ENCODE measurements at regions of chr12 and their contacts with region 1.

Region 1: GRCh38 chr12:52879394-52880351 is 25.2 kb downstream of the KRT8 start:
- DNase-seq: peak in 1 of 2 experiments; percentile 86
- H3K4me3 ChIP-seq: peak overlapping the region in 3 of 4 experiments; percentile 29 to 59 (median 42); a peak in 6 of 8 replicates
- H3K27ac ChIP-seq: no peak overlapping the region
- H3K4me1 ChIP-seq: peaks cover 0 to 8% (median 4%) of the 10 kb centered on the region in 4 experiments; a peak in 4 of 7 replicates
- H3K27me3 ChIP-seq: peaks cover 0 to 10% (median 5%) of the 10 kb centered on the region in 4 experiments; a peak in 3 of 7 replicates
- CTCF ChIP-seq: peak; percentile 80 to 98 (median 98)
- EP300 ChIP-seq: no peak
- POLR2A ChIP-seq: no peak
- RAD21 ChIP-seq: peak; percentile 96

Region 2: DNA sequence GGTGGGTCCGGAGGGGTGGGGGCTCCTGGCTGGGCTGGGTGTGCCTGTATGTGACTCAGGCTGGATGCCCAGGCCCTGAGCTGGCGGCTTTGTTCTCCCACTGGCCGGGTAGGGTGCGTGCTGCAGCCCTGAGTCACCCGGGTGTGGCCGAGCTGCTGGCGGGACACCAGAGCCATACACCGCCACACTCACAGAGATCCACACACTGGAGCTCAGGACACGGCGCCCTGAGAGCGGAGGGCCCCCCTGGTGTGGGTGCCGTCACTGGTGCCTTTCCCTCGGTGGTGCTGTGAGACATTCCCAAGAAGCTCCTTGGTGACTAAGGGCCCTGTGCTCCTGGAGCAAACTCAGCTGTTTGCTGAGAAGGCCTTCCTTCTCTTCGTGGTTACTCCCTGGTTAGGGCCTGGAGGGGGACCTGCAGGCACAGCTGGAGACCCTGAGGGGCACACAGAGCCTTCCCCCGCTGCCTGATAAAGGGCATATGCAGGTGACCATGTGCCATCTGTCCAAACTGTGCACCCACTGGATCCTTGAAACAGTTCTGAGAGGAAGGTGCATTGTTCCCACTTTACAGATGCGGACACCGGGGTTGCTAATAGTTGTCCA is 732.2 kb before region 1 on chr12:
- CTCF ChIA-PET with region 1: interaction called, 26 read pairs
- POLR2A ChIA-PET with region 1: no interaction called
- DNase-seq: no peak
- H3K4me3 ChIP-seq: no peak overlapping the region
- H3K27ac ChIP-seq: peak overlapping the region; percentile 73
- H3K4me1 ChIP-seq: peaks cover 8 to 44% (median 19%) of the 10 kb centered on the region in 4 experiments
- H3K27me3 ChIP-seq: no peaks in the 10 kb centered on the region; a peak in 1 of 7 replicates
- CTCF ChIP-seq: no peak
- EP300 ChIP-seq: no peak
- POLR2A ChIP-seq: no peak
- RAD21 ChIP-seq: no peak

Region 3: GRCh38 chr12:52380271-52380694 is 499.4 kb before region 1 on chr12:
- CTCF ChIA-PET with region 1: interaction called, 31 read pairs
- POLR2A ChIA-PET with region 1: no interaction called
- DNase-seq: peak in 1 of 2 experiments; percentile 67
- H3K4me3 ChIP-seq: no peak overlapping the region
- H3K27ac ChIP-seq: no peak overlapping the region
- H3K4me1 ChIP-seq: no peaks in the 10 kb centered on the region
- H3K27me3 ChIP-seq: no peaks in the 10 kb centered on the region
- CTCF ChIP-seq: peak; percentile 68 to 77 (median 69)
- EP300 ChIP-seq: no peak
- POLR2A ChIP-seq: no peak
- RAD21 ChIP-seq: peak; percentile 36 to 51; a peak in 3 of 4 replicates

Region 4: DNA sequence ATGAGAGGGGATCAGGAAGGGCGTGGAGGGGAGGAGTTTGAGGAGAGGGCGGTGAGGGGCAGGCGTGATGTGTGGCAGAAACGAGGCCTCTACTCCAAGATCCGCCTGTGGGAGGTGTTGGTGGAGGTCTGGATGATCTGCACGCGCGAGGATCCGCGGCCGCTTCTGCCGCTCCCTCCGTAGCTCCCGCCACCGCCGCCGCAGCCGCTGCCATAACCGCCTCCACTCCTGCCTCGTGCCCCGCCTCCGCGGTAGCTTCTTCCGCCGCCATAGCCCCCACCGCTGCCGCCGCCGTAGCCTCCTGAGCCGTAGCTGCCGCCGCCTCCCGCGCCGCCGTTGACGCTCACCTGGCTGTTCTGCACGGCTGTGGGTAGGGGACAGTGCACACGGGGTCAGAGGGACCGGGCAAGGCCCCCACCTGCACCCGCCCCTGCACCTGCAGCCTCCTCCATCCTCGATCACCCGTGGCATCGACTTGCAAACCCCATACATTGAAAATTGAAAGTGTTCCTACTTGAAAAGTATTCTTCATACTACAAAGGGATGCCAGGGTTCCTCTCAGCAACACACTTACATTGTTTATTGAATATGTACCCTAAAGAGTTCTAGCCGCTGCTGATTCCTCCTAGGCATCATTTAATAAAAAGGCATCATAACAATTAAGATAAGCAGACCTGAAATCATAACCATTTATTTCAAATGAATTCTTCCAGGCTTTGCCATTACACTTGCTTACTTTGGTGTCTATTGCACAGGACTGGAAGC is 188.4 kb before region 1 on chr12:
- CTCF ChIA-PET with region 1: interaction called, 20 read pairs
- POLR2A ChIA-PET with region 1: no interaction called
- DNase-seq: peak in 1 of 2 experiments; percentile 68
- H3K4me3 ChIP-seq: peak overlapping the region; percentile 31 to 58 (median 36)
- H3K27ac ChIP-seq: no peak overlapping the region
- H3K4me1 ChIP-seq: peaks cover 0 to 9% (median 3%) of the 10 kb centered on the region in 4 experiments; a peak in 2 of 7 replicates
- H3K27me3 ChIP-seq: peaks cover 0 to 30% (median 16%) of the 10 kb centered on the region in 4 experiments; a peak in 6 of 7 replicates
- CTCF ChIP-seq: no peak
- EP300 ChIP-seq: no peak
- POLR2A ChIP-seq: no peak
- RAD21 ChIP-seq: no peak

Region 5: DNA sequence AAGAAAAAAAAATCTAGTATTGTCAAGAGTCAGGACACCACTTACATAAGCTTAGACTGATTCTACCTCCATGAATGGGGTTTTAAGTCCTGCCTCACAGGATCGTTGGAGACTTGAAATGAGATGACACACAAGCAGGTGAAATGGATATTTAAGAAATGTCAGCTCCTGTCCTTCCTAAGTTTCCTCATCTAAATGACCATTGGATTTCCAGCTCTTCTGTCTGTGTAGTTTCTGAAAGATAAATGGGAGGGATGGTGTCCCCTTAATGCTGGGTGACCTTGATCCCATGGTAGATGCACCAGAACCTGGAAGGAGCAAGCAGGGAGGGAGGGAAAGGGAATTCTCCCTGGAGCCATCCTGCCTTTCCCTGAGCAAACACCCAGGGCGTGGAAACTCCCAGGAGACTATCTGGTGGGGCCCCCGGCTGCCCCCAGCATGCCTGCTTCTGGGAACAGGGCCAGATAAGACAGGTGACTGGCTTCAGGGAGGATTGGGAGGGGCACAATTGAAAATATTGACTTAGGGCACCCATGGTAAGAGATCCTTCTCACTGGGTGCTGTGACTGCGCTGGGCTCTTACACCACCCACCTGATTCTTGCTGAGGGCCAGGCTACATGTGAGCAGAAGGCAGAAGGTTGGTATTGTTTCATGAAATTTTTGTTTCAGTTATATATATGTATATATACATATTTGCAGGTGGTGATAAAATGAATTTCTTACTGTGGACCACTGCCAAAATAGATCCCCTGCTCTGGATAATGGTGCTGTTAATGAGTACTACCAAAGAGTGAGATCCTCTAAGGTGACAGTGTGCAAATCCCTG is 15.6 kb after region 1 on chr12:
- CTCF ChIA-PET with region 1: interaction called, 351 read pairs
- POLR2A ChIA-PET with region 1: interaction called, 12 read pairs
- DNase-seq: no peak
- H3K4me3 ChIP-seq: no peak overlapping the region
- H3K27ac ChIP-seq: no peak overlapping the region
- H3K4me1 ChIP-seq: no peaks in the 10 kb centered on the region
- H3K27me3 ChIP-seq: no peaks in the 10 kb centered on the region
- CTCF ChIP-seq: no peak
- EP300 ChIP-seq: no peak
- POLR2A ChIP-seq: no peak
- RAD21 ChIP-seq: no peak

Region 6: DNA sequence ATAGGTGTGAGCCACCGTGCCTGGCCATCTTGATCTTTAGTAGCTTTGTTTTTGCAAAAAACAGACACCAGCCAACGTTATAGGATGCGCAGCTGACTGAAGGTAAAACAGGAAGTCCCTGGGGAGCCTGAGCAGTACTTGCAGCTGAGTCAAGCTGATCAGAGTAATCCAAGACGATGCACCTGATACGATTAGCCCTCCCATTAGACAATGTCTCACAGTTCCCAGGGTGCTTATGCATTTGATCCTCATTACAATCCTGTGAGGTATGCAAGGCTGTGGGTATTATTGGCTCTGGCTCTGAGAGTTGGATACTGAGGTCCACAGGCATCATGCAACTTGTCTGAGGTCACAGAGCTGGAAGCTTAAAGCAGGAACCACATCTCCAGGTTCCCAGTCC is 77.3 kb after region 1 on chr12:
- CTCF ChIA-PET with region 1: interaction called, 63 read pairs
- POLR2A ChIA-PET with region 1: no interaction called
- DNase-seq: no peak
- H3K4me3 ChIP-seq: no peak overlapping the region
- H3K27ac ChIP-seq: no peak overlapping the region
- H3K4me1 ChIP-seq: no peaks in the 10 kb centered on the region; a peak in 1 of 7 replicates
- H3K27me3 ChIP-seq: no peaks in the 10 kb centered on the region
- CTCF ChIP-seq: no peak
- EP300 ChIP-seq: no peak
- POLR2A ChIP-seq: no peak
- RAD21 ChIP-seq: no peak

Region 7: DNA sequence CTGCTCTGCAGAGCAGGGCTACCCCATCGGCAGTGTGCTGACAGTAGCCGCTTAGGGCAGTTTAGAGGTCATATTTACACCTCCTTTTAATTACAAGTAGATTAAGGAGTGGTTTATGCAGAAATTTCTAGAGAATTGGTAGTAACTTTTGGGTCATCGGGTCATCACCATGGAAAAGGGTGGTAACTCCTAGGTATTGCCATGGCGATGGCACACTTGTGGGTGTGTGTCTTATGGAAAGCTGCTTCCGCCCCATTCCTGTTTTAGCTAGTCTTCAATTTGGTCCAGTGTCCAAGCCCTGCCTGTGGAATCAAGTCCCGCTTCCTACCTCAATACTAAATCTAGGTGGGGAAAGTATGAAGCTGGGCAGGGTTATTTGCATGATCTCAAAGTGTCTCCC is 271.4 kb after region 1 on chr12:
- CTCF ChIA-PET with region 1: no interaction called
- POLR2A ChIA-PET with region 1: no interaction called
- DNase-seq: peak in 1 of 2 experiments; percentile 35
- H3K4me3 ChIP-seq: no peak overlapping the region
- H3K27ac ChIP-seq: no peak overlapping the region
- H3K4me1 ChIP-seq: peaks cover 0 to 2% (median 0%) of the 10 kb centered on the region in 4 experiments; a peak in 2 of 7 replicates
- H3K27me3 ChIP-seq: no peaks in the 10 kb centered on the region; a peak in 1 of 7 replicates
- CTCF ChIP-seq: no peak
- EP300 ChIP-seq: no peak
- POLR2A ChIP-seq: no peak
- RAD21 ChIP-seq: no peak

Measured in H1 (cell line).